CD8-positive, alpha-beta memory T cell (primary cell): ENCODE measurements at regions of chr14 and their contacts with region 1.

Region 1: DNA sequence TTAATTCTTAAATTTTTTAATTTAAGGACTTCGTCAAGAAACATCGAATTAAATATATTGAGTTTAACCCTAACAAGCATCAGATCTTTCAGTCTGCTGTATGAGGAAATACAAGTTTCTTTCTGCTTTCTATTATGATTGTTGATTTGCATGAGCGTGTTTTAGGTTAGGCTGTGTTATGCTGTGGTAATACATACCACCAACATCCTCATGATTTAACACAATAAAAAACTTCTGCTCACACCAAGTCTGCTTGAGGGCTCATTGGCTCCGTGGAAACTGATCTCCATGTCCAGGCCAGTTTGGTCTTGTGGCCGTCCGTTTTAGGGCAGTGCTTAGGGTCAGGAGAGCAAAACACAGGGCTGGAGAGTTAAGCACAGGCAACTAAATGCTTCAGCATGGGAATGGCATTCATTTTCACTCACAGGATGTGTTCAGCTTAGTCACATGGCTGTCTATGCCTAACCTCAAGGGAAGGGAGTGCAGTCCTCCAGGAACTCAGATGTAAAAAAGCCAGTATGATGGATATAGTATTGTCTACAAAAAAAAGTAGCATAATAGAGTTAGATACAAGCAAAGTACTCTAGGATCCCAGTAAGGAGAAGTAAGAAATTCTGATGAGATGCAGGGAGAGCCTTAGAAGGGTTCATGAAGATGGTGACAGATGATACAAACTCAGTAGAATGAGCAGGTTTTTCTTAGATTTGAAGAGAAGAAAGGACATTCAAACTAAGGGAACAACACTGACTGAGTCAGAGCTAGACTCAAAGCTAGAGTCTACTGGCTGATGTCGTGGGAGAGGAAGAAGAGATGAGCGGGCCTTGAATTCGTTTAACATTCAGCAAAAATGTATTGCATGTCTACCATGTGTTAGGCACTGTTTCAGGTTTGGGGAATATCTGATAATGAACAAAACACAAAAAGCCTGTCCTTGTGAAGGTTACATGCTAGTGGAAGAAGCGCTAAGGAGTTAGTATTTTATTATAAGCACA is 16.3 kb downstream of the MARK3 start:
- DNase-seq: no peak
- H3K4me3 ChIP-seq: no peak overlapping the region
- H3K4me3 Mint-ChIP-seq: peak overlapping the region; percentile 0 to 75 (median 27)
- H3K27ac ChIP-seq: peak overlapping the region; percentile 25
- H3K27ac Mint-ChIP-seq: peak overlapping the region; percentile 8 to 67 (median 30)
- H3K4me1 ChIP-seq: peaks cover 58% of the 10 kb centered on the region
- H3K4me1 Mint-ChIP-seq: peaks cover 60 to 82% (median 79%) of the 10 kb centered on the region in 3 donors
- H3K27me3 ChIP-seq: no peaks in the 10 kb centered on the region
- H3K27me3 Mint-ChIP-seq: no peaks in the 10 kb centered on the region

Region 2: GRCh38 chr14:103391048-103391447 is 10.5 kb before region 1 on chr14:
- CTCF ChIA-PET with region 1: interaction called, 12 read pairs
- POLR2A ChIA-PET with region 1: no interaction called
- DNase-seq: peak; percentile 17 to 59 (median 36)
- H3K4me3 ChIP-seq: no peak overlapping the region
- H3K4me3 Mint-ChIP-seq: peak overlapping the region in 4 of 7 donors; percentile 33 to 61 (median 58)
- H3K27ac ChIP-seq: no peak overlapping the region
- H3K27ac Mint-ChIP-seq: peak overlapping the region; percentile 9 to 76 (median 63)
- H3K4me1 ChIP-seq: peaks cover 61% of the 10 kb centered on the region
- H3K4me1 Mint-ChIP-seq: peaks cover 59 to 85% (median 74%) of the 10 kb centered on the region in 3 donors
- H3K27me3 ChIP-seq: no peaks in the 10 kb centered on the region
- H3K27me3 Mint-ChIP-seq: no peaks in the 10 kb centered on the region